Spleen (tissue), 13 donors: ENCODE measurements at regions of chr14 and their contacts with region 1.

Region 1: GRCh38 chr14:67166450-67166853 is 22.8 kb upstream of the GARIN2 start:
- DNase-seq: no peak
- H3K4me3 ChIP-seq: no peak overlapping the region
- H3K27ac ChIP-seq: no peak overlapping the region
- H3K4me1 ChIP-seq: no peaks in the 10 kb centered on the region
- H3K27me3 ChIP-seq: no peaks in the 10 kb centered on the region
- CTCF ChIP-seq: peak; percentile 31 to 71 (median 56)
- POLR2A ChIP-seq: no peak

Region 2: DNA sequence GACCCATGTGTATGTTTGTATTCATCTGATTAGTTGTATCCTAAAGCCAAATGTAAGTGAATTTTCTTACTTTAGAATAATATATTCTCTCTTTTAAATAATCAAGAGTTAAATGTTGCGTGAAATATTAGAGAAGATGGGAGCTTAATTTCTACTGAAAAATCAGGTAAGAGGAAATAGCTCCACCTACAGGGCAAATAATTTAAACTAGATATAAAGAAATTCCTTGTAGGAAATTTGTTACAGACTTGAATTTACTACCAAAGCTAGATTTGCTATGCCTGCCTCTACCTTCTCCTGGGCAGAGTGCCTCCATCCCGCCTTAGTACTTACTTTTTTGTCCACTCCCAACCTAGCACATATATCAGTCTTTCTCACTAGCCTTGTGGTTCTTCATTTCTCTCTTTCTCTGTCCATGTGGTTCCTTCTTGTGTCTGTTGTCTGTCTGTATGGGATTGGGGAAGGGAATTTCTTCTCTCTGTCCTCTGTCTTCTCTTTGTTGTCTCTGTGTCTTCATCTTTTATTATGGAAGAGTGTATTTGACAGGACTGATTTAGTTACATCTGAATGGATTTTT is 119.5 kb after region 1 on chr14:
- intact Hi-C with region 1: loop called (anchors 5 kb)
- DNase-seq: no peak
- H3K4me3 ChIP-seq: no peak overlapping the region
- H3K27ac ChIP-seq: no peak overlapping the region
- H3K4me1 ChIP-seq: peaks cover 0 to 8% (median 3%) of the 10 kb centered on the region in 6 donors
- H3K27me3 ChIP-seq: no peaks in the 10 kb centered on the region
- CTCF ChIP-seq: peak in 8 of 11 experiments; percentile 27 to 59 (median 48)
- POLR2A ChIP-seq: no peak